ENCODE measurements at regions of chr11 and their contacts with region 1.

Region 1: DNA sequence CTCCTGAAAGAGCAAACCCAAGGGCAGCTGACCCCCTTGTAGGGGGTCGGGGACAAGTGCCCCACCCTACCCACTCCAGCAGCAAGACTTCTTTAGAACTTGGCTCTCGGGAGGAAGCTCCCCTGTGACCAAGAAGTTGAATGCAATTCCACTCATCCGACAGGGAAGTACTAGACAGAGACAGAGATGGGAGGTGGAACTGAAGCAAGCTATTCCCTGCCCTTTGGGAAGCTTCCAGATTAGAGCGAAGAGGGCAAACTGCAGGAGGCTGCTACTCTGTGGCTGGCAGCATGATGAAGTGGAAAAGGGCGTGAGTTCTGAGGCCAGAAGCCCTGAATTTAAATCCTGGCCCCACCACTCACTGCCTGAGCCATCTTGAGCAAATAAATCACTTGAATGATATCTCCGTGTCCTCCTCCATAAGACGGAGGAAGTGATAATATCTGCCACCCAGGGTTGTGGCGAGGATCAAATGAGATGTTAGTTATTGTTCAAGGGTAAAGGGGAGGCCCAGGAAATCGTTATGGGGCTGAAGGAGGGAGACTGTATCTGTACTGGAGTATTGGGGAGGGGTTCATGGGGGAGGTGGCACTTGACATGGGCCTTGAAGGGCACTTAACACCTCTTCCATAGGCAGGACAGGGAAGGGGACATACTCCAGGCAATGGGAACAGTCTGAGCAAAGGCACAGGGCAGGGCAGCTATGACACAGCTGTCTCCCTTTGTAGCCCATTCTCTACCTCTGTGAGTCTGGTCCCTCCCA is 16.2 kb upstream of the DGKZ start:
- DNase-seq: peak in 33 of 35 experiments; percentile 22 to 74 (median 55)
- ATAC-seq: peak; percentile 77 to 85 (median 78)
- H3K4me3 ChIP-seq: peak overlapping the region; percentile 41 to 47
- H3K4me3 Mint-ChIP-seq: peak overlapping the region; percentile 73 to 84 (median 78)
- H3K27ac ChIP-seq: peak overlapping the region; percentile 30
- H3K27ac Mint-ChIP-seq: peak overlapping the region; percentile 93 to 99
- H3K4me1 ChIP-seq: peaks cover 37 to 62% of the 10 kb centered on the region in 2 experiments
- H3K4me1 Mint-ChIP-seq: peaks cover 60 to 66% (median 63%) of the 10 kb centered on the region in 3 donors
- H3K27me3 ChIP-seq: peaks cover 0 to 48% of the 10 kb centered on the region in 2 experiments
- H3K27me3 Mint-ChIP-seq: peaks cover 0 to 13% of the 10 kb centered on the region in 2 donors

Region 2: GRCh38 chr11:46308631-46309419 is 22.2 kb before region 1 on chr11:
- CTCF ChIA-PET with region 1: interaction called in 1 of 2 experiments, 12 read pairs
- POLR2A ChIA-PET with region 1: no interaction called
- DNase-seq: peak in 33 of 35 experiments; percentile 15 to 75 (median 53)
- ATAC-seq: peak; percentile 69 to 82 (median 76)
- H3K4me3 ChIP-seq: no peak overlapping the region
- H3K4me3 Mint-ChIP-seq: peak overlapping the region in 1 of 3 donors; percentile 11
- H3K27ac ChIP-seq: no peak overlapping the region
- H3K27ac Mint-ChIP-seq: no peak overlapping the region
- H3K4me1 ChIP-seq: peaks cover 6 to 21% of the 10 kb centered on the region in 2 experiments
- H3K4me1 Mint-ChIP-seq: peaks cover 6 to 18% (median 13%) of the 10 kb centered on the region in 3 donors
- H3K27me3 ChIP-seq: peaks cover 0 to 16% of the 10 kb centered on the region in 2 experiments
- H3K27me3 Mint-ChIP-seq: peaks cover 0 to 3% of the 10 kb centered on the region in 2 donors

Region 3: DNA sequence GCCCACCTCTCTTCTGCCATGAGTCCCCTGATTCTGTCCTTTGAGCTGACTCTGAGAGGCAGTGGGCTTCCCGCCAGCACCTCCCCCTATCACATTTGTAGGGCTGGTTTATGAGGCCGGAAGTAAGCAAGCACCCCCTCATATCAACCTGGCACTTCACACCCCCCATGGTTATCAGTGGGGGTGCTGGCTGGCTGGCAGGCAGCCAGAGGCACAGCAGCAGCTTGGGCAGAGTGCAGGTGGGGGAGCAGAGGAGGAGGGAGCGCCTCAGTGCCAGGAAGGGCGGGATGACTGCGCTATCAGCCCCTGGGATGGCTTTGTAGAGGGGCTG is 83.4 kb after region 1 on chr11:
- CTCF ChIA-PET with region 1: no interaction called
- POLR2A ChIA-PET with region 1: no interaction called
- DNase-seq: peak in 25 of 35 experiments; percentile 8 to 63 (median 31)
- ATAC-seq: peak; percentile 19 to 84 (median 43)
- H3K4me3 ChIP-seq: no peak overlapping the region
- H3K4me3 Mint-ChIP-seq: peak overlapping the region in 1 of 3 donors; percentile 55
- H3K27ac ChIP-seq: no peak overlapping the region
- H3K27ac Mint-ChIP-seq: peak overlapping the region in 1 of 2 donors; percentile 28
- H3K4me1 ChIP-seq: peaks cover 2 to 18% of the 10 kb centered on the region in 2 experiments
- H3K4me1 Mint-ChIP-seq: peaks cover 18 to 26% (median 26%) of the 10 kb centered on the region in 3 donors
- H3K27me3 ChIP-seq: no peaks in the 10 kb centered on the region
- H3K27me3 Mint-ChIP-seq: no peaks in the 10 kb centered on the region